CD8-positive, alpha-beta T cell (primary cell): ENCODE measurements at regions of chr17 and their contacts with region 1.

Region 1: DNA sequence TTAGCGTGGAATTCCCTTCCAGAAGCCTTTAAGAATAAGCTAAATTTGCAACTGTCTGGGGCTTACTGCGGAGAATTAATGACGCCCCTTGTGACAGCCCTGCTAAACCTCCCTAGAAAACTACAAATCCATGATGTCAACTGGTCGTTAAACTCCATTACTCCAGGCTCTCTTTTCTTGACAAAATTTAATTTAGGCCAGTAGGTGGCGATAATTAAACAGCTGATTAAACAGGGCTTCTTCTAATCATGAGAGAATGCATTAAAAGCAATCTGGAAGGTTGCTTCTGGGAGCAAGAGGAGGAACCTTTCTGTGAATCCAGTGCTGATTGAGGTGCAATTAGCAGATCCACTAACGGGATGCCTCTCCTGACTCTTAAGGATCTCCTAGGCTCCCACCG is 8.1 kb upstream of the NLRP1 start:
- DNase-seq: peak in 2 of 9 experiments; percentile 47 to 63
- ATAC-seq: peak; percentile 55
- H3K4me3 ChIP-seq: no peak overlapping the region
- H3K4me3 Mint-ChIP-seq: no peak overlapping the region
- H3K27ac ChIP-seq: no peak overlapping the region
- H3K27ac Mint-ChIP-seq: no peak overlapping the region
- H3K4me1 ChIP-seq: peaks cover under 1% of the 10 kb centered on the region
- H3K4me1 Mint-ChIP-seq: peaks cover 1% of the 10 kb centered on the region
- H3K27me3 ChIP-seq: peaks cover 0 to 6% of the 10 kb centered on the region in 2 experiments
- H3K27me3 Mint-ChIP-seq: peaks cover 21% of the 10 kb centered on the region
- CTCF ChIP-seq: peak; percentile 64

Region 2: DNA sequence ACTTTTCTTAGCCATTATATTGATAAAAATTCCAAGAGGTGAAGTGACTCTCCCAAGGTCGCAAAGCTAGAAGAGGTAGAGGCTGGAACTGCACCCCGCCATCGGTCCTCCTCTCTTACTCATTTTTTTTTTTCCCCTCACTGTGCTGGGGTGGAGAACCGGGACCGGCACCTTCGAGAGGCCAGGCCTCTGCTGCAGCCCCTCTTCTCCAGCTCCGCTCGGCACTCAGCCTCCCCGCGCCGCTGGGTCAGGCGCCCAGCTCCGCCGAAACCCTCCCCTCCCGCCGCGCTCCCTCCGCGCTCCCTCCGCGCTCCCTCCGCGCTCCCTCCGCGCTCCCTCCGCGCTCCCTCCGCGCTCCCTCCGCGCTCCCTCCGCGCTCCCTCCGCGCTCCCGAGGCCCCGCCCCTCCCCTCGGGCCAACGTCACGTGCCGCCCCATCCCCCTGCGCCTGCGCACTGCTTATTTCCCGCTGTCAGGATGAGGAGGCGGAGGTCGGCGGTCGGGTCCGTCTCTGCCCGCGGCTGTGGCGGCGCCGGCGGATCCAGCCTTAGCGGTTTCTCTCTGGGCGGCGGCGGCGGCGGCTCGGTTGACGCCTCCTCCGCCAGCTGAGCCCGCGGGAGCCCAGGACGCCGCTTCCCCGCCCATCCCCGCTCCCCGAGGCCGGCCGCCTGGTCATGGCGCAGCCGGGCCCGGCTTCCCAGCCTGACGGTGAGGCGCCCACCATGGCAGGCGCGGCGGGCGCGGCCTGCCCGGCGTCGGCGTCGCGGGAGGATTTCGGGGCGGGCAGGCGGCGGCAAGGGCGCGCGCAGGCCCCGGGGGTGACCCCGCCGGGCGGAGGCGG is 310.3 kb before region 1 on chr17 and contains the start of gene RABEP1:
- CTCF ChIA-PET with region 1: no interaction called
- POLR2A ChIA-PET with region 1: no interaction called
- intact Hi-C with region 1: no loop called
- DNase-seq: peak; percentile 85 to 97 (median 95)
- ATAC-seq: peak; percentile 81
- H3K4me3 ChIP-seq: peak within 1 kb of the TSS; percentile 61 to 63
- H3K4me3 Mint-ChIP-seq: peak within 1 kb of the TSS; percentile 93
- H3K27ac ChIP-seq: peak within 1 kb of the TSS; percentile 60 to 61
- H3K27ac Mint-ChIP-seq: peak within 1 kb of the TSS; percentile 93
- H3K4me1 ChIP-seq: peaks cover 41% of the 10 kb centered on the region
- H3K4me1 Mint-ChIP-seq: peaks cover 38% of the 10 kb centered on the region
- H3K27me3 ChIP-seq: no peaks in the 10 kb centered on the region
- H3K27me3 Mint-ChIP-seq: no peaks in the 10 kb centered on the region
- CTCF ChIP-seq: no peak
- total RNA-seq, gene RABEP1: 27.1 to 27.6 TPM

Region 3: DNA sequence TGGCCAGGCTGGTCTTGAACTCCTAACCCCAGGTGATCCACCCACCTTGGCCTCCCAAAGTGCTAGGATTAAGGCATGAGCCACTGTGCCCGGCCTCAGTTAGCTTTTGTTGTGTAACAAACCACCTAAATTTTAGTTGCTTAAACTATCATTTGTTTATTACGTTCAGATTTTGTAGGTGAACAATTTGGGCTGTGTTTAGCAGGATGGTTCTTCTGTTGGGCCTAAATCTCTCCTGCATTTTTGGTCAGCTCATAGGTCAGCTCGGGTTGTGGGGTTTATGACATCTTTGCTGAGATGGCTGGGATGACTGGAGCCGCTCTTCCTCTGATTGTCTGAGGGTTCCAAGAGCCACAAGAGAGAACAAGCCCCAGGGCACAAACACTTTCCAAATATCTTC is 13.1 kb after region 1 on chr17:
- CTCF ChIA-PET with region 1: interaction called, 14 read pairs
- POLR2A ChIA-PET with region 1: interaction called, 4 read pairs
- intact Hi-C with region 1: no loop called
- DNase-seq: no peak
- ATAC-seq: no peak
- H3K4me3 ChIP-seq: no peak overlapping the region
- H3K4me3 Mint-ChIP-seq: no peak overlapping the region
- H3K27ac ChIP-seq: no peak overlapping the region
- H3K27ac Mint-ChIP-seq: no peak overlapping the region
- H3K4me1 ChIP-seq: no peaks in the 10 kb centered on the region
- H3K4me1 Mint-ChIP-seq: no peaks in the 10 kb centered on the region
- H3K27me3 ChIP-seq: peaks cover 0 to 6% of the 10 kb centered on the region in 2 experiments
- H3K27me3 Mint-ChIP-seq: peaks cover 31% of the 10 kb centered on the region
- CTCF ChIP-seq: no peak

Region 4: DNA sequence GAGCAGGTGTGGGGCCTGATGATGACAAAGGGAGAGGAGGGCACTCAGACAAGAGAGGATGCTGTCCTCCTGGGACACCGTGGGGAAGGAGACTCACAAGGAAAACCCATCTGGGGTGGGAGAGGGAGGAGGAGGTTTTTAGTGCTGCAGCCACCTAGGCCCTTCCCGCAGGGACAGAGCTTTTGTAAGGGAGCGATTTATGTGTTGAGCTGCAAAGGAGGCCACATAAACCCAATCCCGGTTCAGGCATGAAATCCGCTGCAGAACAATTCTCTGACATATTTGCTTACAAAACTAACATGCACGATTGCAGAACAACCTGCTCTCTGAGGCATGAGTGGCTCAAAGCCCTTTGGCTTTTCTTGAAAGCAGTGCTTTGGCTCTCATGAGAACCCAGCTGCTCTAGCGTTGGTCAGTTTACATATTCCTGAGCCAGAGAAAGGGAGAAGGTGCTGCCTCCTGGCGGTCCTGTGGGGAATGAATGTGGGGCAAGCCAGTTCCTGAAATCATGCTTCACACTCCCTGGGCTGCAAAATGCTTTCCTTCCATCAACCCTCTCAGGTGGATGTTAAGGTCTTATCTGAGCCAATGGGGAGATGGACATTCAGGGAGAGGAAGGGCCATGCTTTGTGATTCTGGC is 114.3 kb after region 1 on chr17:
- CTCF ChIA-PET with region 1: interaction called, 39 read pairs
- POLR2A ChIA-PET with region 1: no interaction called
- intact Hi-C with region 1: loop called in 1 of 2 experiments (anchors 1 kb)
- DNase-seq: peak; percentile 26 to 72 (median 61)
- ATAC-seq: peak; percentile 38
- H3K4me3 ChIP-seq: no peak overlapping the region
- H3K4me3 Mint-ChIP-seq: no peak overlapping the region
- H3K27ac ChIP-seq: no peak overlapping the region
- H3K27ac Mint-ChIP-seq: no peak overlapping the region
- H3K4me1 ChIP-seq: no peaks in the 10 kb centered on the region
- H3K4me1 Mint-ChIP-seq: no peaks in the 10 kb centered on the region
- H3K27me3 ChIP-seq: peaks cover 0 to 2% of the 10 kb centered on the region in 2 experiments
- H3K27me3 Mint-ChIP-seq: peaks cover 33% of the 10 kb centered on the region
- CTCF ChIP-seq: peak; percentile 63

Region 5: GRCh38 chr17:6421700-6422604 is 829.6 kb after region 1 on chr17:
- CTCF ChIA-PET with region 1: interaction called, 34 read pairs
- POLR2A ChIA-PET with region 1: no interaction called
- intact Hi-C with region 1: loop called (anchors 1 kb)
- DNase-seq: peak; percentile 47 to 83 (median 73)
- ATAC-seq: peak; percentile 51
- H3K4me3 ChIP-seq: no peak overlapping the region
- H3K4me3 Mint-ChIP-seq: no peak overlapping the region
- H3K27ac ChIP-seq: no peak overlapping the region
- H3K27ac Mint-ChIP-seq: no peak overlapping the region
- H3K4me1 ChIP-seq: peaks cover 9% of the 10 kb centered on the region
- H3K4me1 Mint-ChIP-seq: no peaks in the 10 kb centered on the region
- H3K27me3 ChIP-seq: no peaks in the 10 kb centered on the region
- H3K27me3 Mint-ChIP-seq: peaks cover 5% of the 10 kb centered on the region
- CTCF ChIP-seq: peak; percentile 68

Region 6: GRCh38 chr17:6435968-6436367 is 843.6 kb after region 1 on chr17:
- CTCF ChIA-PET with region 1: interaction called, 14 read pairs
- POLR2A ChIA-PET with region 1: no interaction called
- intact Hi-C with region 1: loop called (anchors 1 kb)
- DNase-seq: peak; percentile 25 to 75 (median 60)
- ATAC-seq: peak; percentile 93
- H3K4me3 ChIP-seq: no peak overlapping the region
- H3K4me3 Mint-ChIP-seq: no peak overlapping the region
- H3K27ac ChIP-seq: no peak overlapping the region
- H3K27ac Mint-ChIP-seq: no peak overlapping the region
- H3K4me1 ChIP-seq: no peaks in the 10 kb centered on the region
- H3K4me1 Mint-ChIP-seq: peaks cover 2% of the 10 kb centered on the region
- H3K27me3 ChIP-seq: no peaks in the 10 kb centered on the region
- H3K27me3 Mint-ChIP-seq: peaks cover 28% of the 10 kb centered on the region
- CTCF ChIP-seq: peak; percentile 77

Region 7: DNA sequence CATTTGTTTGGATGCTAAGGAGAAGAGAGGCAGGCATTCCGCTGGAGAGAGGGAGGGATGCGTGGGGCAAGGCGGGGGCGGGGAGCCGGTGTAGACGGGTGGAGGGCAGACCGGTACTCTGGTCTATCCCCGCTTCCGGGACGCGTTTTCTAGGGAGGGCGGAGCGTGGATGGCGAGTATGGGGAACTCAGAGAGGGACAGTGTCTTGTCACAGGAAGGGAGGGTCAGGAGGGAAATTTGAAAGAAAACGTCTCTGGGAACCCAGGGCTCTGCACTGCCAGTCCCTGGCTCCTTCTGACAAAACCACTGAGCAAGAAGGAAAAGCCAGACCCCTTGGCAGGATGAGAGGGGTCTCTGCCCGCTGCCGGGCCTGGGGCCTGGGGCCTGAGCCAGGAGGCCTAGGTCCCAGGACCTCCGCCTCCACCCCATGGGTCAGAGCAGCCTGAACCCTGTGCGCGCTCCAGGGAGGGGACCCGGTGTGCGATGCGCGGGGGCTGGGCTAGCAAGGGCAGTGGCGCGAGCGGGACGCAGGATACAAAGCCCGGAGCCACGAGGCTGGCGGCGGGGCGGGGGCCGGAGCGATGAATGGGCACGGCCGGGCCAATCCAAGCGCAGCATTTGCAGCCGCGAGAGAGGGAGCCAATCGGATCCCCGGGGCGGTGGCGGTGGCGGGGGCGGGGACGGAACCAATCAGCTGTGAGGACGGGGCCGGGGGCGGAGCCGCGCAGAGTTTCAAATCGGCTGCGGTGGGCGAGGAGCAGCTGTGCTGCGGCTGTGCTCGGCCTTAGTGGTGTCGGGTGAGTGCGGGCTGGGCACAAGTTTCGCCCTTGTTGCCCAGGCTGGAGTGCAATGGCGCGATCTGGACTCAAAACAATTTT is 851.5 kb after region 1 on chr17 and contains the start of gene PIMREG:
- CTCF ChIA-PET with region 1: interaction called, 11 read pairs
- POLR2A ChIA-PET with region 1: no interaction called
- intact Hi-C with region 1: no loop called
- DNase-seq: peak; percentile 79 to 91 (median 90)
- ATAC-seq: peak; percentile 96
- H3K4me3 ChIP-seq: peak within 1 kb of the TSS; percentile 68 to 94
- H3K4me3 Mint-ChIP-seq: peak within 1 kb of the TSS; percentile 85
- H3K27ac ChIP-seq: peak within 1 kb of the TSS; percentile 25 to 37
- H3K27ac Mint-ChIP-seq: peak within 1 kb of the TSS; percentile 77
- H3K4me1 ChIP-seq: peaks cover 6% of the 10 kb centered on the region
- H3K4me1 Mint-ChIP-seq: peaks cover 12% of the 10 kb centered on the region
- H3K27me3 ChIP-seq: no peaks in the 10 kb centered on the region
- H3K27me3 Mint-ChIP-seq: peaks cover 10% of the 10 kb centered on the region
- CTCF ChIP-seq: no peak
- total RNA-seq, gene PIMREG: not detected